ENCODE measurements at regions of chrX and their contacts with region 1.

Region 1: GRCh38 chrX:18674788-18675735 is 3.2 kb upstream of the RS1 start:
- DNase-seq: peak; percentile 74
- H3K4me3 Mint-ChIP-seq: peak overlapping the region; percentile 69
- H3K27ac Mint-ChIP-seq: peak overlapping the region; percentile 67
- H3K4me1 Mint-ChIP-seq: peaks cover 6% of the 10 kb centered on the region
- H3K27me3 Mint-ChIP-seq: peaks cover 4% of the 10 kb centered on the region

Region 2: DNA sequence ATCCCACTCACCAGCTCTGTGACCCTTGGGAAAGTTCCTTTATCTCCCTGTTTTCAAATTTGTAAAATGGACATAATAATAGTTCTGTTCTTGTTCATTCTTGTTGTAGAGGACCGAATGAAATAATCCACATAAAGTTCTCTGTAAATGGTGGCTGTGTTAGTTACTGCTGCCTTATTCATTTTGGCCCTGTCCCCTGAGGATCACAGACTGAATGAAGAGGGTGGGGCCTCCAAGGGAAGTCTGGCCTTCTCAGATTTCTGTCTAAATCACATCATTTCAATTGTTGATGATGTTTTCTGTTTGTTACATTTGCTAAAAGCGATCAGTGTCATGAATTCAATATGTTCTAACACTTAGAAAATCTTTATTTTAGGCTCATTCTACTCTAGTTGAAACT is 150.3 kb after region 1 on chrX:
- intact Hi-C with region 1: no loop called
- DNase-seq: no peak
- H3K4me3 Mint-ChIP-seq: no peak overlapping the region
- H3K27ac Mint-ChIP-seq: no peak overlapping the region
- H3K4me1 Mint-ChIP-seq: no peaks in the 10 kb centered on the region
- H3K27me3 Mint-ChIP-seq: no peaks in the 10 kb centered on the region

Region 3: GRCh38 chrX:18886344-18887161 is 211.5 kb after region 1 on chrX:
- intact Hi-C with region 1: loop called (anchors 10 kb)
- DNase-seq: peak; percentile 17
- H3K4me3 Mint-ChIP-seq: peak overlapping the region; percentile 84
- H3K27ac Mint-ChIP-seq: peak overlapping the region; percentile 84
- H3K4me1 Mint-ChIP-seq: peaks cover 18% of the 10 kb centered on the region
- H3K27me3 Mint-ChIP-seq: no peaks in the 10 kb centered on the region

Region 4: DNA sequence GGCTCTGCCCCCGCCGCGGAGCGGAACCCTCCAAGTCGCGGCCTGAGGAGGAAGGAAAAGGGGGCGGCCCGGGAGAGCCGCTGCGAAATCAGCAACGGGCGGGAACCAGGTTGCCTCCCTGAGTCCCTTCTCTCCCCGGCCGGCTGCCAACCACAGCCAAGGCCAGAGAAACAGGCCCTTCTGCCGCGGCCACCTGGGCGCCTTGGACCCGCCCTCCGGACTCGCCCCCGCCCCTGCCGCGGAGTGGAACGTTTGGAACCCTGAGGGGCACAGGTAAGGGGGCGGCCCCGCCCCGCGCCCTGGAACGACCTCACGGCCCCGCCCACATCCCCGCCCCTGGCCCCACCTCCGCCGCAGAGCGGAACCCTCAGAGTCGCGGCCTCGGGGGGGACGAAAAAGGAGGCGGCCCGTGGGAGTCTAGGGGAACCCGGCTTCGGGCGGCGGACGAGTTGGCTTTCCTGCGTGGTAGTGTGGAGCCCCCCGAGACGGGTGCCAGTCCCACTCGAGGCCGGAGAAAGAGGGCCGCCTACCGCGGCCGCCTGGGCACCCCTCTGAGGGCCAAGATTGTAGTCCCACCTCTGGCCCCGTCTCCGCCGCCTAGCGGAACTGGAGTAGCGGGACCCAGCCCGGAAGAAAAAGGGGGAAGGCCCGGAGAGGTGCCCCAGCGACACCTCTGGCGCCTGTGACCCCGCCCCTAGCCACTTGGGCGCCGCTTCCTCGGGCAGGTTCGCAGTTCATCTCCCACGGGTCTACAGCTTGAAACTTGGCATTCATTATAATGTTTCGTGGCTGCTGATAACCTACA is 309.5 kb after region 1 on chrX:
- intact Hi-C with region 1: loop called (anchors 10 kb)
- DNase-seq: peak; percentile 76
- H3K4me3 Mint-ChIP-seq: peak overlapping the region; percentile 84
- H3K27ac Mint-ChIP-seq: peak overlapping the region; percentile 78
- H3K4me1 Mint-ChIP-seq: peaks cover 6% of the 10 kb centered on the region
- H3K27me3 Mint-ChIP-seq: no peaks in the 10 kb centered on the region

Region 5: DNA sequence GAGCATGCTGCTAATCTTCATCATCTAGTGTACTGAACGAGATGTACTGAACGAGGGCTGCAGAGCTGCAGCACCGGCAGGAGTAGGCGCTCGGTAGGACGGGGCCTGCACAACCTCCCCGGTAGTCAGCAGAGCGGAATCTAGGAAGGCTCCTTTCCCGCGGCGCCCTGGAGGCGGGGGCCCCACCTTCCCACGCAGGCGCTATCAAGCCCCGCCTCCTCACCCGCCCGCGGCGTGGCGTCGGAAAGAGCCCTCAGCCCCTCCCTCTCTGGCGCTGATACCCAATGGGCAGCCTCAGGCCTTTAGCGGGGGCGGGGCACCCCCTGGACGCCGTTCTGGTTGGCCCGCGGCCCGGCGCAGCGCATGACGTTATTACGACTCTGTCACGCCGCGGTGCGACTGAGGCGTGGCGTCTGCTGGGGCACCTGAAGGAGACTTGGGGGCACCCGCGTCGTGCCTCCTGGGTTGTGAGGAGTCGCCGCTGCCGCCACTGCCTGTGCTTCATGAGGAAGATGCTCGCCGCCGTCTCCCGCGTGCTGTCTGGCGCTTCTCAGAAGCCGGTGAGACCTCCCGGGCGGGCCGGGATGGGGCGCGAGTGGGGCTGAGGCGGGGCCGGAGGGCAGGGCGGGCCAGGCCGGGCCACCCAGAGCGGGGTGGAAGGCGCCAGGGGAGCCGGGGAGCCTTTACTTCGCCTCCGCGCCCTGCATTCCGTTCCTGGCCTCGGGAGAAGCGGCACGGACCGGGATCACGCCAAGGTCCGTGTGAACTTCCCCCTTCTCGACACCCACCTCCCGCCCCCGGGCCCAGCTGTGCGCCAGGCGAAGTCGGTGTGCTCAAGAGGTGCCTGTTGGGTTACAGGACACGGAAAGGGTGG is 668.7 kb after region 1 on chrX and contains the start of gene PDHA1:
- intact Hi-C with region 1: loop called (anchors 10 kb)
- DNase-seq: peak; percentile 88
- H3K4me3 Mint-ChIP-seq: peak within 1 kb of the TSS; percentile 85
- H3K27ac Mint-ChIP-seq: peak within 1 kb of the TSS; percentile 76
- H3K4me1 Mint-ChIP-seq: peaks cover 15% of the 10 kb centered on the region
- H3K27me3 Mint-ChIP-seq: no peaks in the 10 kb centered on the region
- total RNA-seq, gene PDHA1: 200 and 208 TPM in 2 replicates